Lower lobe of right lung (tissue), 2 donors: ENCODE measurements at regions of chr1 and their contacts with region 1.

Region 1: GRCh38 chr1:221435504-221435904 is 306.4 kb downstream of the DUSP10 start:
- DNase-seq: no peak
- ATAC-seq: peak; percentile 77 to 86
- H3K4me3 ChIP-seq: no peak overlapping the region
- H3K27ac ChIP-seq: no peak overlapping the region
- H3K4me1 ChIP-seq: peaks cover 18% of the 10 kb centered on the region
- H3K27me3 ChIP-seq: no peaks in the 10 kb centered on the region
- CTCF ChIP-seq: peak; percentile 97

Region 2: GRCh38 chr1:221263831-221264767 is 171.4 kb before region 1 on chr1:
- intact Hi-C with region 1: loop called (anchors 10 kb)
- DNase-seq: no peak
- ATAC-seq: peak; percentile 80 to 85
- H3K4me3 ChIP-seq: no peak overlapping the region
- H3K27ac ChIP-seq: no peak overlapping the region
- H3K4me1 ChIP-seq: no peaks in the 10 kb centered on the region
- H3K27me3 ChIP-seq: no peaks in the 10 kb centered on the region
- CTCF ChIP-seq: peak; percentile 57